Caco-2 (cell line): ENCODE measurements at regions of chr2 and their contacts with region 1.

Region 1: GRCh38 chr2:156784020-156784701 is 348.0 kb downstream of the GPD2 start:
- DNase-seq: no peak
- H3K4me3 ChIP-seq: no peak overlapping the region
- H3K4me3 Mint-ChIP-seq: no peak overlapping the region
- H3K27ac Mint-ChIP-seq: no peak overlapping the region
- H3K4me1 ChIP-seq: peaks cover 12% of the 10 kb centered on the region
- H3K4me1 Mint-ChIP-seq: peaks cover 25% of the 10 kb centered on the region
- H3K27me3 ChIP-seq: no peaks in the 10 kb centered on the region
- H3K27me3 Mint-ChIP-seq: no peaks in the 10 kb centered on the region
- CTCF ChIP-seq: no peak

Region 2: DNA sequence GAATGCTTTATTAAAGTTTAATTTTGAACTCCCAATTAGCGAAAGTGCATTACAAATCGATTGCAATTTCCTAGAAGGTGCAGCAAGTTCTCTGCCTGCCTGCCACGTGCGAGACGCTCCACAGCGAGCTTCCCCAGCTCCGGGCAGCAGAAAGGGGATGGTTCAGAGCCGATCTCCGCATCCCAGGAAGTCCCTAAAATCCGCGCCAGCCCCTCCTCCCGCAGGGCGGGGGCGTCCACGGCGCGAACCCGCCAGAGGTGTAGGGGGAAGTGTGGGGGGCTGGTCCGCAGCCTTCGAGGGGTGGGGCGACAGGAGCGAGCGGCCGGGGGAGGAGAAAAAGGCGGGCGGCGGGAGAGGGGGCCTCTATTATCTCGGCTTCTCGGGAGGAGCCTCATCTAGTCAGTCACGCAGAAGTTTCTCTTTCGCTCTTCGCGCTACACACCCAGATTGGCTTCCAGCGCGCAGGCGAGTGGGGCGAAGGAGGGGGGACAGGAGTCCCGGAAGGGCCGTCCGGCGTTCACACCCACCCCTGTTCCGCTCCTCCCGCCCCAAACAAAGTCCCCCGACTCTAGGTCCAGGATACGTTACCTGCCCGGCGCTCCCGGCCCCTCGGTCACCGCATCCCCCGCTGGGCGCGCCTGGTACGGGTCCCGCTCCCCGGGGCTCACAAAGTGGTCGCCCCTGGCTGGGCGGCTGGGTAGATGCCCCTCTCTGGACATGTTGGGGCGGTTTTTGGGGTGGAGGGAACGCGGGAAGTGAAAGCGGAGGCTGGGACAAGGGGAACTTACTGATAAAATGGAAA is 442.5 kb before region 1 on chr2:
- CTCF ChIA-PET with region 1: no interaction called
- POLR2A ChIA-PET with region 1: no interaction called
- intact Hi-C with region 1: loop called (anchors 5 kb)
- DNase-seq: peak; percentile 83 to 92
- H3K4me3 ChIP-seq: peak overlapping the region; percentile 94
- H3K4me3 Mint-ChIP-seq: peak overlapping the region; percentile 87
- H3K27ac Mint-ChIP-seq: peak overlapping the region; percentile 88
- H3K4me1 ChIP-seq: peaks cover 9% of the 10 kb centered on the region; the same call in 1 of the 2 replicates
- H3K4me1 Mint-ChIP-seq: no peaks in the 10 kb centered on the region
- H3K27me3 ChIP-seq: no peaks in the 10 kb centered on the region
- H3K27me3 Mint-ChIP-seq: no peaks in the 10 kb centered on the region
- CTCF ChIP-seq: no peak

Region 3: DNA sequence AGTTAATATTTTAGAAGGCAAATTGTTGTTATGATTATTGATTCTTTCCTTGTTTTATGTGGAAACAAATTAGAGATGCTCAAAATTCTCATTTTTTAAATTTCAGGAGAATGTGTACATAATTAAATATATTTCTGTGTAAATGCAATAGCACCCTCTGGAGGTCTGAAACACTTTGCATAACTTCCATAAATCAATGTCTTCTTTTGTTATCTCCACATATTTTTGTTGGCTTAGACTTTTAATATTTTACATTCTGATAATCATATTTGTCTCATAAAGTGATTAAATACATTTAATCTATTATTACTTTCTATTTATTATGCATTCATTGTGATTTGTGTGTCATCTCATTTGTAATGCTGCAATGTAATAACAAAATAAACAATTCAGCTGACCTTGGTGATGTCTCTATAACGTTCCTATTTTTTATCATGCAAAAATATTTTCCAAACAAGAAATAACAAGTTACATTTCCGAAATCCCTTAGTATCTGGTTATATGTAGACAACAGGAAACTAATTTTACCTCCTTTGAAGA is 271.6 kb after region 1 on chr2:
- CTCF ChIA-PET with region 1: no interaction called
- POLR2A ChIA-PET with region 1: no interaction called
- intact Hi-C with region 1: loop called (anchors 10 kb)
- DNase-seq: peak in 1 of 2 experiments; percentile 13
- H3K4me3 ChIP-seq: no peak overlapping the region
- H3K4me3 Mint-ChIP-seq: no peak overlapping the region
- H3K27ac Mint-ChIP-seq: no peak overlapping the region
- H3K4me1 ChIP-seq: peaks cover 8% of the 10 kb centered on the region
- H3K4me1 Mint-ChIP-seq: peaks cover 7% of the 10 kb centered on the region
- H3K27me3 ChIP-seq: no peaks in the 10 kb centered on the region
- H3K27me3 Mint-ChIP-seq: no peaks in the 10 kb centered on the region
- CTCF ChIP-seq: peak; percentile 40 to 47